Sigmoid colon (tissue), 7 donors: ENCODE measurements at regions of chr2 and their contacts with region 1.

Region 1: GRCh38 chr2:215430528-215431187 is 5.2 kb downstream of the FN1 start:
- DNase-seq: no peak
- H3K4me3 ChIP-seq: peak overlapping the region in 1 of 4 donors; percentile 89
- H3K27ac ChIP-seq: peak overlapping the region; percentile 95 to 99 (median 98)
- H3K4me1 ChIP-seq: peaks cover 0 to 63% (median 49%) of the 10 kb centered on the region in 4 donors
- H3K27me3 ChIP-seq: no peaks in the 10 kb centered on the region
- CTCF ChIP-seq: no peak
- EP300 ChIP-seq: no peak
- POLR2A ChIP-seq: no peak

Region 2: GRCh38 chr2:215098875-215099274 is 331.8 kb before region 1 on chr2:
- intact Hi-C with region 1: no loop called
- DNase-seq: no peak
- H3K4me3 ChIP-seq: no peak overlapping the region
- H3K27ac ChIP-seq: no peak overlapping the region
- H3K4me1 ChIP-seq: no peaks in the 10 kb centered on the region
- H3K27me3 ChIP-seq: no peaks in the 10 kb centered on the region
- CTCF ChIP-seq: no peak
- EP300 ChIP-seq: no peak
- POLR2A ChIP-seq: no peak

Region 3: DNA sequence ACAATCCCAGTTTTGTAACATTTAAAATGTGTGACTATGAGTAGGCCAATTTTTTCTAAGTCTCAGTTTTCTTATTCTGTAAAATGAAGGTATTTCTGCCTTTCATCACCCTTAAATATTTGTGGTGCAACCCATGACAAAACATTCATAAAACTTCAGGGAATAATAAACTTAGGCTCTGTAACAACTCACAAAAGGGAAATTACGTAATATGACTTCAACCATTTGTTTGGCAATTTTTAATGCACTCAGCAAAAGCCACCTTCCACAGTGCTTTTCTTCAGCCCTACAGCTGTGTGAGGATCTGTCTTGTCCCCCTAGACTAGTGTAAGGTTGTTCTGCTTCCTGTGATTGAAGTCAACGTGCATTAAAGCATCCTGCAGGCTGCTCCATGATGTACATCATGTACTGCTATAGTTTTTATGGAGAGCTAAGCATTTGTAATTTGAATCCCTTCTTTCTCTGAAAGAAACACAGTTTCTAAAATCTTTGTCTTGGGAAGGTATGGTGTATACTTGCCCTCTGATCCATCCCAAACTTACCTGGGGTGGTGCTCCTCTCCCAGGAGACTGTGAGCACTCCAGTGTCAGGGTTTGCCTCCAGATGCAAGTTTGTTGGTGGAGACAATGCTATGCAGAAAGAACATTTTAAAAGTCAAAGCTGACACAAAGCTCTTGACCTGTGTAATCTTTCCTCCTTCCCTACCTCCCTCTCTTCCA is 33.9 kb before region 1 on chr2:
- intact Hi-C with region 1: loop called (anchors 5 kb)
- DNase-seq: no peak
- H3K4me3 ChIP-seq: no peak overlapping the region
- H3K27ac ChIP-seq: peak overlapping the region; percentile 50 to 73 (median 68)
- H3K4me1 ChIP-seq: peaks cover 0 to 41% (median 37%) of the 10 kb centered on the region in 4 donors
- H3K27me3 ChIP-seq: no peaks in the 10 kb centered on the region
- CTCF ChIP-seq: no peak
- EP300 ChIP-seq: peak in 1 of 4 donors; percentile 43
- POLR2A ChIP-seq: no peak

Region 4: GRCh38 chr2:216328347-216328746 is 897.7 kb after region 1 on chr2:
- intact Hi-C with region 1: no loop called
- DNase-seq: no peak
- H3K4me3 ChIP-seq: no peak overlapping the region
- H3K27ac ChIP-seq: no peak overlapping the region
- H3K4me1 ChIP-seq: no peaks in the 10 kb centered on the region
- H3K27me3 ChIP-seq: no peaks in the 10 kb centered on the region
- CTCF ChIP-seq: no peak
- EP300 ChIP-seq: no peak
- POLR2A ChIP-seq: no peak